ENCODE measurements at regions of chr11 and their contacts with region 1.

Region 1: GRCh38 chr11:518463-519250 is 11.6 kb upstream of the RNH1 start:
- DNase-seq: peak; percentile 97
- H3K4me3 ChIP-seq: peak overlapping the region in 1 of 3 experiments; percentile 13
- H3K27ac ChIP-seq: peak overlapping the region; percentile 48
- H3K4me1 ChIP-seq: peaks cover 21% of the 10 kb centered on the region
- H3K27me3 ChIP-seq: no peaks in the 10 kb centered on the region
- CTCF ChIP-seq: peak; percentile 72 to 85

Region 2: DNA sequence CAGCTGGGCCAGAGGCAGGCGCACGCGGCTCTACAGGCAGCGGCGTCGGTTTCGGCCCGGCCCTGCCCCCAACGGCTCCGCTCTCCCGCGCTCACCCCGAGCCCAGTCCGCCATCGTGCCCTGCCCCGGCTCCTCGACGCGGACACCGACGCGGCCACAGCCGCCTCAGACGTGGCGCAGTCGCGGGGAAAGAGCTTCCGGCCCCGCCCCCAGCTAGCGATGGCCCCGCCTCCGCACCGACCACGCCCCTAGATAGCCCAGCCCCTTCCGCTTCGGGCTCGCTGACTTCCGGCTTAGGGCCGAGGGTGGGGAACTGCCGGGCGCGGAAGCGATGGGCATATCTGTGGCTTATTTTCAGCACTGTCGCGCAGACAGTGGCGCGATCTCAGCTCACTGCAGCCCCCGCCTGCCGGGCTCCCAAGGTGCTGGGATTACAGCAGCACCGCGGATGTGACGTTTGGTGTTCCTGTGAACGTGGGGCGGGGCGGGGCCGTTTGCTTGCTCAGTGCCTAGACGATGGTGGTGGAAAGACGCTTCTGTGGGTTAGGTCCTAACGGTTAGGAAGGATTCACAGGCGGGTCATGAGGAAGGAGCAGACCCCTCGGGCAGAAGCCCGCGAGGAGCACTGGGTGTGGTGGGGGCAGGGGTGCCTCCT is 311.3 kb before region 1 on chr11 and contains the starts of genes BET1L and RIC8A:
- CTCF ChIA-PET with region 1: no interaction called
- dilution Hi-C with region 1: loop called (anchors 10 kb)
- in situ Hi-C with region 1: no loop called
- intact Hi-C with region 1: loop called (anchors 5 kb)
- DNase-seq: peak; percentile 98
- H3K4me3 ChIP-seq: peak within 1 kb of the TSS; percentile 68 to 92 (median 74)
- H3K27ac ChIP-seq: peak within 1 kb of the TSS; percentile 90
- H3K4me1 ChIP-seq: peaks cover 22% of the 10 kb centered on the region
- H3K27me3 ChIP-seq: no peaks in the 10 kb centered on the region
- CTCF ChIP-seq: no peak
- total RNA-seq, gene BET1L: 13.5 to 53.8 TPM
- total RNA-seq, gene RIC8A: 112 to 132 TPM

Region 3: DNA sequence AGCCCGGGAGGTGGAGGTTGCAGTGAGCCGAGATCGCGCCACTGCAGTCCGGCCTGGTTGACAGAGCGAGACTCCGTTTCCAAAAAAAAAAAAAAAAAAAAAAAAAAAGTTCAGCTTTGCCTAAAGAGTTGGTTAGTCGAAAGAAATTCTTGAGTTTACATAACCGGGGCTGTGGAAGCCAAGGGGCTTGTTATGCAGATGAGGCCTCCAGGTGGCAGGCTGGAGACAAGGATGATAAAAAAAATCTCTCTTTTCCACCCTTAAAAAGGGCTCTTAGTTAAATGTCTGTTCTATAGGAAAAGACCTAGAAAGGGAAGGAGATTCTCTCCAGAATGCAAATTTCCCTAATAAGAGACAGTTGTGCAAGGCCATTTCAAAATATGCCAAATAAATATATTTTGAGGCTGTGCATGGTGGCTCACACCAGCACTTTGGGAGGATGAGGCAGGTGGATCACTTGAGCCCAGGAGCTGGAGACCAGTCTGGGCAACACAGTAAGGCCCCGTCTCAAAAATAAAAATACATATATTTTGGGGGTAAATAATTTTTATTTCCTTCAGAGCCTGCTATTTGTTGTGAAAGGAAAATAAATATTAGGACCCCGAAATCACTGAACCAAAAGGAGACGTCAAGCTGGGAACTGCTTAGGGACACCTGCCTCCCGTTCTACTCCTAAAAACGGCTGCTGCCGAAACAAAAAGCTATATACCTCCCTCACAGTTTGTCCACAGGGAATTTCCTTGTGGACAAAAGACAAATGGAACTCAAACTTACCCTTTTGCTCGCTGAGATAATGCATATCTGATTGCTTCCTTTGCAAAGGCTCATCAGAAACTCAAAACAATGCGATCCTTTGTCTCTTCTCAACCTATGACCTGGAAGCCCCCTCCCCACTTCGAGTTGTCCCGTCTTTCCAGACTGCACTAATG is 213.5 kb before region 1 on chr11:
- CTCF ChIA-PET with region 1: no interaction called
- dilution Hi-C with region 1: no loop called
- in situ Hi-C with region 1: no loop called
- intact Hi-C with region 1: loop called (anchors 5 kb)
- DNase-seq: peak; percentile 25
- H3K4me3 ChIP-seq: no peak overlapping the region
- H3K27ac ChIP-seq: no peak overlapping the region
- H3K4me1 ChIP-seq: peaks cover 8% of the 10 kb centered on the region
- H3K27me3 ChIP-seq: no peaks in the 10 kb centered on the region
- CTCF ChIP-seq: peak; percentile 70 to 71

Region 4: GRCh38 chr11:363948-364761 is 154.5 kb before region 1 on chr11:
- CTCF ChIA-PET with region 1: no interaction called
- dilution Hi-C with region 1: no loop called
- in situ Hi-C with region 1: no loop called
- intact Hi-C with region 1: loop called (anchors 2 kb)
- DNase-seq: peak; percentile 83
- H3K4me3 ChIP-seq: no peak overlapping the region
- H3K27ac ChIP-seq: no peak overlapping the region
- H3K4me1 ChIP-seq: peaks cover 26% of the 10 kb centered on the region
- H3K27me3 ChIP-seq: peaks cover 5% of the 10 kb centered on the region
- CTCF ChIP-seq: peak; percentile 73 to 82

Region 5: DNA sequence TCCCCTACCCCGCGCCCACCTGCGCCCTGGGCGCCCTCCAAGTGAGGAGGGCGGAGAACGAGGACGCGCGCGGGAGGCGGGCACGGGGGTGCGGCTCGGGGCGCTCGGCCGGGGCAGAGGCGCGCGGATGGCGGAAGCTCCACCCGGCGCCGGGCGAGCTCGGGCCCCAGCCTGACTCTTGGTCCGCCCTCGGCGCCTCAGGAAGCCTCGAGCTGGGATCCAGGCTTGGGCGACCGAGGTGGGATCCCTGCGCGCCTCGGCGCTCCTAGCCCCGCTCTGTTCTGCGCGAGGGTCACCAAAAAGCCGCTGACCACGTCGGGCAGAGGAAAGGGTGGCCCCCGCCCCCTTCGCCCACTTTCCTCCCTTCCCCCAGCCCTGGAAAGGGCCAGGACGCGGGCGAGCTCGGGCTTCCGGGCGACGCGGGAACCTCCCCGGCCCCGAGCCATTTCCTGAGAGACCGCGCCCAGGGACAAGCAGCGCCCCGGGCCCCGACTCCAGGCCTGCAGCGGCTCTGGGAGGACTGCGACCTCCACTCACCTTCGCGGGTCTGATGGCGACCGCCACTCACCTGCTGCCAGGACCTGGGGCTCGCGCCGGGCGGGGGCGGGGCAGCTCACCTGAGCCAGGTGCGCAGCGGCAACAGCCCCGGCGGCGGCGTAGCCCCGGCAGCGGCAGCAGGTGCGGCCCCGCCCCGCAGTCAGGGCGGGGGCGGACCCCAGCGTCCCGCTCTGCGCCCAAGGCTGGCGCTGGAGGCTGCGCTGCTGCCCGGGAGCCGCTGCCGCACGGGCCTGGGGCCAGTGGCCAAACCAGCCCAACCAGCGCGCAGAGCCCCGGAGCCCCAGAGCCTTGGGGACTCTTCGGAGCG is 101.7 kb before region 1 on chr11:
- CTCF ChIA-PET with region 1: no interaction called
- dilution Hi-C with region 1: no loop called
- in situ Hi-C with region 1: no loop called
- intact Hi-C with region 1: no loop called
- DNase-seq: peak; percentile 45
- H3K4me3 ChIP-seq: peak overlapping the region; percentile 37 to 56 (median 52)
- H3K27ac ChIP-seq: no peak overlapping the region
- H3K4me1 ChIP-seq: peaks cover 17% of the 10 kb centered on the region
- H3K27me3 ChIP-seq: no peaks in the 10 kb centered on the region
- CTCF ChIP-seq: no peak

Region 6: DNA sequence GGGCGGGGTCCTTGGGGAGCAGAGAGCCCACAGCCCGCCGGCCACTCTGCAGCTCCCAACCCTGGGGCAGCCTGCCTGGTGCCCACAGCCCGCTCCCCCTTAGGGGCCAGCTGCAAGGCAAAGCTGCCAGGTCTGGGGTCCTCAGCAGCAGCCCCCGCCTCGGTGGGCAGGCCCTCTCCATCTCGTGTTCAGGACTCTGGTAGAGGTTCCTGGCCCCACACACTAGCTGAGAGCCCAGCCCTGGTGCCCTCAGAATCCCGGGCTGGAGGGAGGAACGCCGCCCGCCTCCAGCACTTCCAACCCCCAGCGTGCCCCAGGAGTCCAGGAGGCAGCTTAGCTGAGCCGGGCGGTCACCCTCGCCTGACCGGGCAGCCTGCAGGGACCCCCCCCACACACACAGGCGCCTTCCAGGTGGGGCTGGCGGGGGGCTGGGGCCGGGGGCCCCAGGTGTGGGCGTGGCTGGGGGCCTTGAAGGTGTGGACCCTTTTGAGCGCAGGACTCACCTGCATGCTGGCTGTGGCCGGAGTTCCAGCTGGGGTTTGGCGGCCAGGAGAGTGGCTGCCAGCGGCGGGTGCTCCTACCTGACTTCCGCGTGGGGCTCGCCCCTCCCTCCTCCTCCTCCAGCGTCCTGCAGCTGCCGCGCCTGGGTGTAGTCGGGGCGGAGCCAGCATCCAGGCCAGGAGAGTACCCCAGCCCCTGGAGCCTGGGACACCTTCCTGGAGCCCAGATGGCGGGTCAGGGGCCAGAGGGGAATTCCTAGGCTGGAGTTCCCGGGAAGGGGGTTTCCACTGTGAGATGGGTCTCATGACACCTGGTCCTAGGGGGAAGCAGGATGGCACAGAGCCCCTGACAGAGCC is 77.0 kb before region 1 on chr11 and contains the start of gene ANO9:
- CTCF ChIA-PET with region 1: no interaction called
- dilution Hi-C with region 1: no loop called
- in situ Hi-C with region 1: no loop called
- intact Hi-C with region 1: no loop called
- DNase-seq: peak; percentile 54
- H3K4me3 ChIP-seq: peak within 1 kb of the TSS; percentile 67 to 73 (median 68)
- H3K27ac ChIP-seq: no peak within 1 kb of the TSS
- H3K4me1 ChIP-seq: peaks cover 26% of the 10 kb centered on the region
- H3K27me3 ChIP-seq: no peaks in the 10 kb centered on the region
- CTCF ChIP-seq: no peak
- total RNA-seq, gene ANO9: 11.3 to 31.2 TPM

Region 7: GRCh38 chr11:506238-506994 is 12.2 kb before region 1 on chr11:
- CTCF ChIA-PET with region 1: interaction called, 5 read pairs
- dilution Hi-C with region 1: no loop called
- in situ Hi-C with region 1: no loop called
- intact Hi-C with region 1: loop called (anchors 1 kb)
- DNase-seq: peak; percentile 96
- H3K4me3 ChIP-seq: peak overlapping the region; percentile 84 to 96 (median 92)
- H3K27ac ChIP-seq: peak overlapping the region; percentile 97
- H3K4me1 ChIP-seq: peaks cover 35% of the 10 kb centered on the region
- H3K27me3 ChIP-seq: no peaks in the 10 kb centered on the region
- CTCF ChIP-seq: no peak

Region 8: GRCh38 chr11:606257-606656 is 87.6 kb after region 1 on chr11:
- CTCF ChIA-PET with region 1: no interaction called
- dilution Hi-C with region 1: no loop called
- in situ Hi-C with region 1: no loop called
- intact Hi-C with region 1: no loop called
- DNase-seq: peak; percentile 89
- H3K4me3 ChIP-seq: no peak overlapping the region
- H3K27ac ChIP-seq: no peak overlapping the region
- H3K4me1 ChIP-seq: peaks cover 18% of the 10 kb centered on the region
- H3K27me3 ChIP-seq: no peaks in the 10 kb centered on the region
- CTCF ChIP-seq: peak in 1 of 2 donors; percentile 3

Measured in mammary epithelial cell (primary cell).